Mammary epithelial cell (primary cell): ENCODE measurements at regions of chr10 and their contacts with region 1.

Region 1: DNA sequence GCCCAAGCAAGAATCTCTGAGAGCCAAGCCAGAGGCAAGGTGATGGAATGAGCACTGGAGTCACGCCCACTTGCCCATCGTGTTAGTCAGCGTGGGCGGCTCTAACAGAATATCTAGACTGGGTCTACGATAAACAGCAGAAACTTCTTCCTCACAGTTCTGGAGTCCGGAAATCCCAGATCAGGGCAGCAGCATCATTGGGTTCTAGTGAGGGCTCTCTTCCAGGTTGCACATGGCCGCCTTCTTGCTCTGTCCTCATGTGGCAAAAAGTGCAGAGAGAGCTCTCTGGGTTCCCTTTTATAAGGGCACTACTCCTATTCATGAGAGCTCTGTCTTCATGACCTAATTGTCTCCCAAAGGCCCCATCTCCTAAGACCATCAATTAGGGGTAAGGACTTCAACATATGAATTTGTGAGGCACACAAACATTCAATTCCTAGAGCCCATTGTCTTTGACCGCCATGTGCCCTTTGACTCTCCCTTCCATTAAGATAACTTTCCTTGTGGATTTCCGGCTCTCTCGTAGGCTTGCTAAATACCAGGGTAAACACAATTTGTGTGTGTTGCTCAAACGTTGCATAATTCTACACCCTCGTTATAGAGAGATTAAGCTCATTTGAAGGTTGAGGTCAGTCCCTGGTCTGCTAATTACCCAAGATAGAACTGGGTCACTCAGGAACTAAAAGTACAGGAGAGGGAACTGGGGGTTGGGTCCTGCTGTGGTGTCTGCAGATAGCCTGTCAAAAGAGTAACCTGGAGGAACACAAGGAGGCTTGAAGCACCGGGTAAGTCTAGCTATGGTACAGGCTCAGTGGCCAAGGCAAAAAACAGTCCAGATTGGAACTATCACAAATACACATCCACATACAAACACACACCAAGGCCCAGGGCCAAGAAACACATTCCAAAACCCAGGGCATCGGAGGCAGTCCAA is 28.6 kb upstream of the USP6NL start:
- DNase-seq: no peak
- H3K4me3 ChIP-seq: no peak overlapping the region
- H3K27ac ChIP-seq: no peak overlapping the region
- H3K4me1 ChIP-seq: no peaks in the 10 kb centered on the region
- H3K27me3 ChIP-seq: no peaks in the 10 kb centered on the region
- CTCF ChIP-seq: no peak

Region 2: DNA sequence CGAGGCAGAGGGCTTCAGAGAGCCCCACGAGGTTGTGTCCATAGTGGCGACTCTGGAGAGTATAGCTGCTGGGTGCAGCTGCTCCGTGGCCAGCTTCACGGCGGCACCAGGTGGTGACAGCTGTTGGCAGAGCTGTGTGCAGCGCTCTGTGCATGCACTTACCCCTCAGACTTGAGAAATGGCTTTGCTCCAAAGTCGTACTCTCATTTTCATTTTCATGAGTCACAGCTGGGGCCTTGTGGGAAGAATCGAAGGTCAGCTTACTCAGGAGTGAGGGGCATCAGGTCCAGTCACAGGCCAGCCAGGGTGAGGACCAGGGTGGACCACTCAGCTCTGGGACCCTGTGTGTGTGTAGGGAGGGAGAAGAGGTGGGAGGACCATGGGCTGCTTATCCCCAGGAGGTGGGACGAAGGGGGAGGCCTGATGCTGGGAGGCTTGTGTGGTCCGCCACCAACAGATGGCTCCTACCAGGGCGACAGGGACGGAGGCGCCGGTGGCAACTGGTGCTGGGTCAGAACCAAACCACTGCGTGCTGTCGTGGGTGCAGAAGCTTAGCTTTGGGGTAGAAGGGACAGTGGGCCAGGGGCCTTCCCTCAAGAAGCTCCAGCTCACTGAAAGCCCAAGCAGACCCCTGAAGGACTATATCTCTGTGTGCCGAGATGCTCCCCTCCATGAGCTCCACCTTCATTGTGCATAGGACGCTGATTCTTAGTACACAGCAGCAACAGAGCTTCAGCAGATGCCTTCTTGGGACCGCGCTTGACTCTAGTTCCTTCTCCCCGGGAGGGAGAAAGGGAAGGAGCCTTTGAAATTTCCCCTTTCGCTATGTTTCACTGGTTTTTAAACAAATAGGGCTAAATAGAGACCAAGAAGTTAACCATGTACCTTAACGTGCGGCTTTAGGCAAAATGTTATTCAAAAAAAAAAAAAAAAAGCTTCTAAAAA is 397.4 kb before region 1 on chr10:
- CTCF ChIA-PET with region 1: no interaction called
- dilution Hi-C with region 1: no loop called
- in situ Hi-C with region 1: no loop called
- intact Hi-C with region 1: no loop called
- DNase-seq: no peak
- H3K4me3 ChIP-seq: no peak overlapping the region
- H3K27ac ChIP-seq: no peak overlapping the region
- H3K4me1 ChIP-seq: no peaks in the 10 kb centered on the region
- H3K27me3 ChIP-seq: no peaks in the 10 kb centered on the region
- CTCF ChIP-seq: no peak

Region 3: DNA sequence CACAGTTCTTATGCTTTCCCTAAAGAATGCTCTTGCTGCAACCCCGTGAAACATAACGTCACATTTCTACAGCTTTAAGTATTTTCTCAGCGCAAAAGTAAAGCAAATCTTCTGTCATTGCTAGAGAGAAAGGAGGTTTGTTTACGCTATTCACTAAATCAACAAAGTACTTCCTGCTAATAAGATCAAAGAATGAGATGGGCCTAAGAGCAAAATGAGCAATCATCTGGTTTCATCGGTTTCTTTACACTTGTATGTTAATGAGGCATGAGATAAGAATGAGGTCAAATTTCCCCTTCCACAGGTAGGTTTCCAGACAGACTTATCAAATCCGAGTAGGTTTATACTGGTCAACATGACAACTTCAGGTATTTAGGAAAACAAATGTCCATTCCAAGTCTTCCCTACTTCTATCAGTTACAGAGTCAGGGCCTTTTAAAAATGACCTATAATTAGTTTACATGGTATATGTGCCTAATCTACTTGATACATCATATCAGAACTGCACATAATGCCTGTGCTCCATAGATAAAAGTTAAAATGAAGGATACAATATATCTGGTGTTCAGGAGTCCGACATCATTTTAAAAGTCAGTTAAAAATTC is 37.1 kb before region 1 on chr10:
- CTCF ChIA-PET with region 1: no interaction called
- dilution Hi-C with region 1: no loop called
- in situ Hi-C with region 1: no loop called
- intact Hi-C with region 1: no loop called
- DNase-seq: peak; percentile 19
- H3K4me3 ChIP-seq: no peak overlapping the region
- H3K27ac ChIP-seq: no peak overlapping the region
- H3K4me1 ChIP-seq: no peaks in the 10 kb centered on the region
- H3K27me3 ChIP-seq: no peaks in the 10 kb centered on the region
- CTCF ChIP-seq: no peak

Region 4: DNA sequence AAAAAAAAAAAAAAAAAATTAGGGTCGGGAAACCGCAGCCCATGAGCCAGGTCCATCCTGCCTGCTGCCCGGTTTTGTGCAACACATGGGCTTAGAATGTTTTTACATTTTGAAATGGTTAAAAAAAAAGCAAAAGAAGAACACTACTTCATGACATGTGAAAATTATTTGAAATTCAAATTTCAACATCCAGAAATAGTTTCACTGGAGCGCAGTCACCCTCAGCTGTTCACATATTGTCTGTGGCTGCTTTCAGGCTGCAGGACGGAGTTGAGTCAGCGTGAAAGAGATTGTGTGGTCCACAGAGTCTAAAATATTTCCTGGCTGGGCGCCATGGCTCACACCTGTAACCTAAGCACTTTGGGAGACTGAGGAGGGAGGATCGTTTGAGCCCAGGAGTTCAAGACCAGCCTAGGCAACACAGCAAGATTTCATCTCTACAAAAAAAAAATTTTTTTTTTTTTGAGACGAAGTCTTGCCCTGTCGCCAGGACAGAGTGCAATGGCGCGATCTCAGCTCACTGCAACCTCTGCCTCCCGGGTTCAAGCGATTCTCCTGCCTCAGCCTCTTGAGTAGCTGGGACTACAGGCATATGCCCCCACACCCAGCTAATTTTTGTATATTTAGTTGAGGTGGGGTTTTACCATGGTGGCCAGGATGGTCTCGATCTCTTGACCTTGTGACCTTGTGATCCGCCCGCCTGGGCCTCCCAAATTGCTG is 38.1 kb after region 1 on chr10:
- CTCF ChIA-PET with region 1: no interaction called
- dilution Hi-C with region 1: loop called (anchors 5 kb)
- in situ Hi-C with region 1: no loop called
- intact Hi-C with region 1: no loop called
- DNase-seq: peak; percentile 77
- H3K4me3 ChIP-seq: no peak overlapping the region
- H3K27ac ChIP-seq: no peak overlapping the region
- H3K4me1 ChIP-seq: no peaks in the 10 kb centered on the region
- H3K27me3 ChIP-seq: no peaks in the 10 kb centered on the region
- CTCF ChIP-seq: no peak